Natural killer cell (primary cell): ENCODE measurements at regions of chr10 and their contacts with region 1.

Region 1: GRCh38 chr10:26556748-26557640 is 118.9 kb downstream of the APBB1IP start:
- DNase-seq: peak in 1 of 2 donors; percentile 73
- ATAC-seq: peak in 2 of 3 donors; percentile 58 to 62
- H3K4me3 ChIP-seq: no peak overlapping the region
- H3K4me3 Mint-ChIP-seq: no peak overlapping the region
- H3K27ac ChIP-seq: no peak overlapping the region
- H3K27ac Mint-ChIP-seq: peak overlapping the region; percentile 21 to 45
- H3K4me1 ChIP-seq: no peaks in the 10 kb centered on the region
- H3K4me1 Mint-ChIP-seq: peaks cover 20 to 21% of the 10 kb centered on the region in 2 donors
- H3K27me3 ChIP-seq: no peaks in the 10 kb centered on the region
- H3K27me3 Mint-ChIP-seq: no peaks in the 10 kb centered on the region
- CTCF ChIP-seq: peak; percentile 88

Region 2: DNA sequence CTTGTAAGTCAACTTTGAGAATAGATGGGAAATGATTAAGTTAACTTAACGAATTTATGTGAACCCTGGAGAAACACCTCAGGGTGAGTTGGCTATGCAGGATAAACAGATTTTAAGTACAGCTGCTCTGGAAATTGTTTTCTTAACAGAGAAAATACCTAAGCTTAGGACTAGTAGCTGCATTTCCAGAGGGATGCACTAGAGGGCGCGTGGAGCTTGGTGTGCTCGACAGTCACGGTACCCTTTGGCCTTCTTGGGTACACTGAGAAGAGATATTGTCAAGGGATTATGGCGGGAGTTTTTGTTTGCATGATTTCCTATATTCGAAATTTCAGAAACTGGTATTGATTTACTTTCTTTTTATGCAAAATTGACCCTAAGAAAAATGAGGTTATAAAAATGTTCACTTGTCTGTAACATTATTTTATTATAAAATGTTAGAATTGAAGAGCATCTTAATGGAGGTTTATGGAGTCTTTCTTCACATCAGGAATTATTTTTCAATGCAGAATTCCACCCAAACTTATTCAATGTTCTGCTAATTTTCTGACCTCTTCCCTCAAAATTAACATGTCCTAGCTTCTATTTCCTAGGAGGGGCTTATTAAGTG is 681.3 kb before region 1 on chr10:
- intact Hi-C with region 1: loop called (anchors 5 kb)
- DNase-seq: peak in 1 of 2 donors; percentile 73
- ATAC-seq: peak in 2 of 3 donors; percentile 59 to 75
- H3K4me3 ChIP-seq: no peak overlapping the region
- H3K4me3 Mint-ChIP-seq: no peak overlapping the region
- H3K27ac ChIP-seq: no peak overlapping the region
- H3K27ac Mint-ChIP-seq: no peak overlapping the region
- H3K4me1 ChIP-seq: no peaks in the 10 kb centered on the region
- H3K4me1 Mint-ChIP-seq: no peaks in the 10 kb centered on the region
- H3K27me3 ChIP-seq: no peaks in the 10 kb centered on the region
- H3K27me3 Mint-ChIP-seq: peaks cover 0 to 3% of the 10 kb centered on the region in 2 donors
- CTCF ChIP-seq: peak; percentile 80